ENCODE measurements at regions of chr17 and their contacts with region 1.

Region 1: DNA sequence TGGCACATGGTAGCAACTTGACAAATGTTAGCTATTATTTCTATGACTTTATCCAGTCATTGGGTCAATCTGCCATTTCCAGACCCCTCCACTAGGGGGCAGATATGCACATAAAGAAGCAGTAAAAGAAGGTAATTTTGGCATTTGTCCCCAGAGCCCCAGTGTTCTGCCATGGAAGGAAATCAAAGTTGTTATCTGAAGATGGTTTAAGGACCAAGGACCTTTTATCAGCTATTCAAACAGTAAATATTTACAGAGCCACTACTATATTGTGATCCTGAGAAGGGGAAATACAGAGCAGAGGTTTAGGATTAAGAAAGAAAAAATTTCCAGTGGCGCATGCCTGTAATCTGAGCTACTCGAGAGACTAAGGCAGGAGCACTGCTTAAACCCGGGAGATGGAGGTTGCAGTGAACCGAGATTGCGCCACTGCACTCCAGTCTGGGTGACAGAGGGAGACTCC is 20.0 kb downstream of the TRAF4 start:
- DNase-seq: no peak
- ATAC-seq: peak; percentile 70 to 80
- H3K4me3 ChIP-seq: no peak overlapping the region
- H3K27ac ChIP-seq: no peak overlapping the region
- H3K4me1 ChIP-seq: peaks cover 38% of the 10 kb centered on the region
- H3K27me3 ChIP-seq: no peaks in the 10 kb centered on the region
- CTCF ChIP-seq: peak; percentile 92

Region 2: DNA sequence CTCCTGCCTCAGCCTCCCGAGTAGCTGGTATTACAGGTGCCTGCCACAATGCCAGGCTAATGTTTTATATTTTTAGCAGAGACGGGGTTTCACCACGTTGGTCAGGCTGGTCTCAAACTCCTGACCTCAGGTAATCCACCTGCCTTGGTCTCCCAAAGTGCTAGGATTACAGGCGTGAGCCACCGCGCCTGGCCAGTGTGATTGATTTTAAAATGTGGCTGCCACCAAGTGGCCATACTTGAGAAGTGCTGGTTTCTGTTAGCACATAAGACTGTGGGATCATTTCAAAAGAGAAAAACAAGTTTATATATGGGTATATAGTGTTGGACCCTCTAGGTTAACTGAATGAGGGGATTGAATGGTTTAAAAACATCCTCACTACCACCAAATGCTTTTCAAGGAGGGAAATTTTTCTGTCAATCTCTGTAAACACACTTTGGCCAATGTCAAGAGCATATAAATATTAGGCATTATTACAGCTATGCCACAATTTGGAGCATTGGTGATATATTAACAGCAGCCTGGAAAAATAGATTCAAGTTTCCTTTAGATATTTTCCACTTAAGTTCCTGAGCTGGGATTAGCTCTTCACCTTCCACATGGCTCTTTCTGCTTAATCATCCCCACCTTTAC is 152.6 kb after region 1 on chr17:
- intact Hi-C with region 1: loop called (anchors 10 kb)
- DNase-seq: peak; percentile 55
- ATAC-seq: peak; percentile 69 to 80
- H3K4me3 ChIP-seq: no peak overlapping the region
- H3K27ac ChIP-seq: no peak overlapping the region
- H3K4me1 ChIP-seq: peaks cover 15% of the 10 kb centered on the region
- H3K27me3 ChIP-seq: no peaks in the 10 kb centered on the region
- CTCF ChIP-seq: peak; percentile 75

Measured in lower lobe of right lung (tissue), 2 donors.